A549 (cell line): ENCODE measurements at regions of chr6 and their contacts with region 1.

Region 1: DNA sequence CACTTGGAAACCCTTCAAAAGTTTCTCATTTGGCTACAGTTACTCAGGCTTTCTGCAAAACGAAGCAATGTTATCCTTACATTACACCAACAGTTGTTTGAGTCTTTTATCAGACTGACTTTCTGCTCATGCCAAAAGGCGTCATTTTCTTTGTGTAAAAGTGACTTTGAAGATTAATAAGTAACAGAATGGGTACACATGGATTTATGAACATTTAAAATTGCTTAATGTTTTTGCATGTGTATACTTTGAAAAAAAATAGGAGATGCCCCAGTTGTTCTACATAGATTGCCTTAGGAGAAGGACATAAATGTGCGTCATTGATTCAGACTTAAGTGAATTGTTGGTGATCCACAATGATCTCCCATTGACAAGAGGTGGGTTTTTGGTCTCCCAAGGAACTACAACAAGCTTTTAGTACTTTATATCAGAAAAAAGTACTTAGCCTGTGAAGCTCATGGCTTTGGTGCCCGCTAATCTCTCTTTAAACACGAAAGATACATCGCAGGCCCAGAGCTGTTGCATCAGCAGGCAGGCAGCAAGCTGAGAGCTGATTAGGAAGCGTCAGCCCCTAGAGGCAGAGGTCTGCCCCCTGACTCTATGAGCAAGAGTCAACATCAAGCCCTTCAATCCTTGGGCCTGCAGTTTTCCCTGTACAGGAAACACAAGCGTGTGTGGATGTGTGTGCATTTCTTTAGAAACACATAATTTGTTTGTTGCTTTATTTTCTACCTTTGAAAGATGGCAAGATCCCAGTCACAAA is 45.9 kb downstream of the SLC22A3 start:
- DNase-seq: peak; percentile 69 to 91
- ATAC-seq: peak; percentile 79 to 81
- H3K4me3 ChIP-seq: no peak overlapping the region
- H3K27ac ChIP-seq: peak overlapping the region; percentile 99 to 100
- H3K4me1 ChIP-seq: peaks cover 88% of the 10 kb centered on the region
- CTCF ChIP-seq: no peak
- EP300 ChIP-seq: peak; percentile 74 to 78; a peak in 3 of 5 replicates
- POLR2A ChIP-seq: no peak
- RAD21 ChIP-seq: peak in 1 of 2 experiments; percentile 6; a peak in 1 of 5 replicates

Region 2: GRCh38 chr6:160348142-160349019 is 45.7 kb before region 1 on chr6 and contains the start of gene SLC22A3:
- CTCF ChIA-PET with region 1: no interaction called
- POLR2A ChIA-PET with region 1: interaction called, 19 read pairs
- DNase-seq: peak; percentile 43 to 51
- ATAC-seq: peak; percentile 57 to 75
- H3K4me3 ChIP-seq: peak within 1 kb of the TSS; percentile 93
- H3K27ac ChIP-seq: peak within 1 kb of the TSS; percentile 96 to 97
- H3K4me1 ChIP-seq: peaks cover 34% of the 10 kb centered on the region
- CTCF ChIP-seq: no peak; the same call in 2 of the 3 replicates
- EP300 ChIP-seq: no peak
- POLR2A ChIP-seq: peak; percentile 32; the same call in 1 of the 2 replicates
- RAD21 ChIP-seq: no peak; a peak in 2 of 5 replicates
- polyA plus RNA-seq, gene SLC22A3: 57.4 and 65.2 TPM in 2 replicates